Gastrocnemius medialis (tissue), 4 donors: ENCODE measurements at regions of chr10 and their contacts with region 1.

Region 1: GRCh38 chr10:69494626-69495558 is 43.6 kb downstream of the TSPAN15 start:
- DNase-seq: peak in 1 of 2 donors; percentile 16
- ATAC-seq: no peak
- H3K4me3 ChIP-seq: no peak overlapping the region
- H3K27ac ChIP-seq: peak overlapping the region; percentile 82 to 91 (median 84)
- H3K4me1 ChIP-seq: peaks cover 54 to 56% of the 10 kb centered on the region in 2 donors
- H3K27me3 ChIP-seq: no peaks in the 10 kb centered on the region
- CTCF ChIP-seq: no peak
- POLR2A ChIP-seq: no peak

Region 2: DNA sequence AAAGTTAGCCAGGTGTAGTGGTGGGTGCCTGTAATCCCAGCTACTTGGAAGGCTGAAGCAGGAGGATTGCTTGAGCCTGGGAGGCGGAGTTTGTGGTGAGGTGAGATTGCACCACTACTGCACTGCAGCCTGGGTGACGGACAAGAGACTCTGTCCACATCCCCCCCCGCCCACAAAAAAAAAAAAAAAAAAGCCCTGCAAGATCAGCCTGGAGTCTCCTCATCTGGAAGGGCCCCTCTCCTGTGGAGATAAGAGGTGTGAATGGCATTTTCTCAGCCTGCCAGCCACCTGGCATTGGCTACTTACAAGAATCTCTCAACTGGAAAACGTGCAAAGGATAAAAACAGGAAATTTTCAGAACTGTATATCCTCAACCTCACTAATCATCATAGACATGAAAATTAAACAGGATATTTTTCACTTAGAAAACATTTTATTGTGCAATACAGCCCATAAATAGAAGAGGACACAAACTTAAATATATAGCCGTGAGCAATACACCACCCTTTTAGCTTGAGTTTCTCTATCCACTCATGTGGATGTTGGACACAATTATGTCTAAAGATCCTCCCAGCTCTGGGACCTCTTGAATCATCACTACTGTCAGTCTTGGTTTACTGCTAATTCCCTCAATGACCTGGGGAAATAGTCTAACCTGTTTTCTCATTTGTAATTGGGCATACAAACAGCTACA is 54.9 kb before region 1 on chr10:
- in situ Hi-C with region 1: no loop called
- intact Hi-C with region 1: loop called (anchors 2 kb)
- DNase-seq: peak in 1 of 2 donors; percentile 73
- ATAC-seq: peak; percentile 79 to 92
- H3K4me3 ChIP-seq: no peak overlapping the region
- H3K27ac ChIP-seq: peak overlapping the region; percentile 77 to 91 (median 85)
- H3K4me1 ChIP-seq: peaks cover 20 to 29% of the 10 kb centered on the region in 2 donors
- H3K27me3 ChIP-seq: no peaks in the 10 kb centered on the region
- CTCF ChIP-seq: no peak
- POLR2A ChIP-seq: no peak

Region 3: GRCh38 chr10:69451209-69451783 is 43.6 kb before region 1 on chr10 and contains the start of gene TSPAN15:
- in situ Hi-C with region 1: no loop called
- intact Hi-C with region 1: loop called (anchors 2 kb)
- DNase-seq: peak; percentile 86 to 89
- ATAC-seq: peak; percentile 77 to 82
- H3K4me3 ChIP-seq: peak within 1 kb of the TSS; percentile 83 to 95 (median 93)
- H3K27ac ChIP-seq: peak within 1 kb of the TSS; percentile 87 to 95 (median 90)
- H3K4me1 ChIP-seq: peaks cover 49 to 59% of the 10 kb centered on the region in 2 donors
- H3K27me3 ChIP-seq: no peaks in the 10 kb centered on the region
- CTCF ChIP-seq: no peak
- POLR2A ChIP-seq: peak; percentile 94
- total RNA-seq, gene TSPAN15: 7.9 to 21.0 (median 11.8) TPM

Region 4: DNA sequence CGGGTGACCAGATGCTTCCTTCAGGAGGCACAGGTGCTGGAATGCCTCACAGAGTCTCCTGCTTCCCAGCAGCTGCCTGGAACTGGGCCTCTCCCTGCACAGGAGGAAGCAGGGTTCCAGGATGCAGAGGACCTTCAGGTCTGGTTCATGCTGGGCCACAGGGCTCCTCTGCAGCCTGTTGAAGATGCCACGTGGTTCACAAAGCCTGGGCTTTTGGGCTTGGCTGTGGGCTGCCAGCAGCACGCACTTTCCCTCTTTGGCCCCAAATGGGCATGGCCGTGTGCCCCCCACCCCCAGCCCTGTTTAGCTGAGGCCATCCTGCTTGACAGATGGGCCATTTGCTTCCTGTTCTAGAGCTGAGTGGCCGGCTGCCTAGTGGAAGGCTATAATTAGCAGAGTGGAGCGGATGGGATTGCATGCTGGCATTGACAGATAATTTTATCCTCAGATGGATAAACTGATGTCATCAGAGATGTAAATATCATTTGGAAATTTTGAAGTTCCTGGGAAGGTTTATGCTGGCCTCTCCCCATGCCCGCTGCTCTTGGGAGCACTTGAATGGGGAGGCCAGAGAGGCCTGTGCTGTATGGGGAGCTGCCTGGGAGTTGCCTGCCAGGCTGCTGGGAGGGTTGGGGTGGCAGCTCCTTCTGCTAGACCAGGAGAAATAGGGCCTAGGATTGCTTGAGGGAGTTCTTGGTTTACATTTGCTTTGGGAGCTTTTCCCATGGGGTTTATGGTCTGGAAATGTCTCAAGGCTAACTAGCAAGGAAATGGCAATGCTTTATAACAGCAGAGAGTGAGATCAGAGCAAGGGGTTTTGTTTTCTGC is 15.4 kb before region 1 on chr10:
- in situ Hi-C with region 1: no loop called
- intact Hi-C with region 1: loop called (anchors 2 kb)
- DNase-seq: peak; percentile 43 to 72
- ATAC-seq: peak; percentile 52 to 60
- H3K4me3 ChIP-seq: peak overlapping the region in 1 of 4 donors; percentile 6
- H3K27ac ChIP-seq: peak overlapping the region; percentile 83 to 91 (median 86)
- H3K4me1 ChIP-seq: peaks cover 82 to 99% of the 10 kb centered on the region in 2 donors
- H3K27me3 ChIP-seq: no peaks in the 10 kb centered on the region
- CTCF ChIP-seq: no peak
- POLR2A ChIP-seq: no peak